ENCODE measurements at regions of chr19 and their contacts with region 1.

Region 1: DNA sequence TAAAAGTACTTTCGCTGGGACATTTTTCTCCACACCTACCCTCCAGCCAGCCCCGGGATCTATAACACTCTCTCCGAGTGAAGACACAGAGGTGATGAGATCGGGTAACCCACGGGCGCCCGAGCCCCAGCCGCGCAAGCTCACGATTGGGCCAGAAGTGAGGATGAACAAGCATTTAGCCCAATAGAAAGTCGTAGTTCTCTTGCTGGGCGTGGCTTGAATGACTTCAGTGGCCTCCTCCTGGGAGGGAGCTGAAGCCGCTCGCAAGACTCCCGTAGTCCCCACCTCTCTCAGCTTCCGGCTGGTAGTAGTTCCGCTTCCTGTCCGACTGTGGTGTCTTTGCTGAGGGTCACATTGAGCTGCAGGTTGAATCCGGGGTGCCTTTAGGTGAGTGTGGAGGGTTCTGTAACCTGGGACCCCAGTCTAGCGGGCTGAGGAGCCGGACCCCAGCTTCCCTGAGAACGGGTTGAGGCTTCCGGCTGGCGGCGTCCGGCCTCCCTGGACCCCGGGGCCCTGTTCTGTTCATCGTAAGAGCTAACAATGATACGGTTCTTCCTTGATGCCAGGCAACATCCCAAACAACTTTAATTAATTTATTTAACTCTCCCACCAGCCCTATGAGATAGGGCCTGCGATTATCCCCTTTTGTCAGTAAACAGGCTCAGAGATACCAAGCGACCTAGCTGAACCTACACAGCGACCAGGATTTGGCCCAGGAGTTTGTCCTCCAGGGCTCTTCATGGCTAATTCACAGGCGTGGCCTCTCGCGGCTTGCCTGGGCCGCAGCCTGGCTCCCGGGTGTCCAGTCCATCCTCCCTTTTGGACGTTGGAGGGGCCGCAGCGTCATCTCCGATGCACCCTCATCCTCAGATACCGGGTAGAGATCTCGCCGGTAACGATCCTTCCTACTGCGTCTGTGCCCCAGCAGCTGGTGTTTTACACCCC is at the start of gene COX6B1:
- DNase-seq: peak; percentile 95
- ATAC-seq: peak; percentile 76
- H3K4me3 Mint-ChIP-seq: peak within 1 kb of the TSS; percentile 92
- H3K27ac Mint-ChIP-seq: peak within 1 kb of the TSS; percentile 84
- H3K4me1 Mint-ChIP-seq: peaks cover 39% of the 10 kb centered on the region
- H3K27me3 Mint-ChIP-seq: no peaks in the 10 kb centered on the region
- total RNA-seq, gene COX6B1: 385 to 437 TPM

Region 2: DNA sequence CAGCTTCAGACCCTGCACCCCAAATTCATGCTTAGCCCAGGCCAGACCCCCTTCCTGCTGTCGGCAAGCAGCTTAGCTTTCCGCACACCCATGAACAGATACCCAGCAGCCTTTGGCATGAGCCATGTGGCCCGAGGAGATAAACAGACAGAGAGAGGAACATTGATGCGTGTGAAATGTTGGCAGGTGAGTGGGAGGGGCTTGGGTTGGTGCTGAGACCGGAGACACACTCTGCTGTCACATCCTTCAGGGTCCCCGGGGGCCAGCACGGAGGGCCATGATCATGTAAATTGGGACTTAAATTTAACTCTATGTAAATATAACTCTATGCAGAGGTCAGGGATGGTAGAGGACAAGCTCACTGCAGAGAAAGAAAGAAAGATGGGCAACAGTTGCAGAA is 317.8 kb before region 1 on chr19:
- CTCF ChIA-PET with region 1: no interaction called
- POLR2A ChIA-PET with region 1: no interaction called
- intact Hi-C with region 1: no loop called
- DNase-seq: no peak
- ATAC-seq: no peak
- H3K4me3 Mint-ChIP-seq: no peak overlapping the region
- H3K27ac Mint-ChIP-seq: no peak overlapping the region
- H3K4me1 Mint-ChIP-seq: peaks cover 26% of the 10 kb centered on the region
- H3K27me3 Mint-ChIP-seq: peaks cover 3% of the 10 kb centered on the region

Region 3: DNA sequence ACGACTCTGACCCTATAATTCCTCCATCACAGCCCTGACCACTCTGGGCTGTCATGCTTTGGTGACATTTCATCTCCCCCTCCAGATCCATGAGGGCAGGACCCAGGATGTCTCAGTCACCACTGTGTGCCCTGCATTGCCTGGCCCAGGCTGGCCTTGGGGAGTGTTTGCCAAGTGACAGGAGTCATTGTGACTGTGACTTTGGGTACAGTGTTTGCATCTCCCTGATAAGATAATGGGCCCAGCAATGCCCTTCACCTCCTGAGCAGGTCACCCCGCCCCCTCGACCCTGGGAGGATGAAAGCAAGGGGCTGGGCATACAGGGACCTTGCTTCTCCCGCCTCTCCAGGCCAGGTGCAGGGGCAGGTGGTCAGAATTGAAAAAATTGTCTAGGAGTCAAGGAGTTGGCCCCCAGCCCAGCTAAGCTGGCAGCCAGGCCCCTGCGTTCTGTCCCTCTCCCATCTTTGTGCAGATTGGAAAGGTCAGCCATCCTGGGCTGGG is 79.0 kb before region 1 on chr19:
- CTCF ChIA-PET with region 1: no interaction called
- POLR2A ChIA-PET with region 1: no interaction called
- intact Hi-C with region 1: no loop called
- DNase-seq: no peak
- ATAC-seq: no peak
- H3K4me3 Mint-ChIP-seq: no peak overlapping the region
- H3K27ac Mint-ChIP-seq: no peak overlapping the region
- H3K4me1 Mint-ChIP-seq: no peaks in the 10 kb centered on the region
- H3K27me3 Mint-ChIP-seq: peaks cover 25% of the 10 kb centered on the region

Region 4: DNA sequence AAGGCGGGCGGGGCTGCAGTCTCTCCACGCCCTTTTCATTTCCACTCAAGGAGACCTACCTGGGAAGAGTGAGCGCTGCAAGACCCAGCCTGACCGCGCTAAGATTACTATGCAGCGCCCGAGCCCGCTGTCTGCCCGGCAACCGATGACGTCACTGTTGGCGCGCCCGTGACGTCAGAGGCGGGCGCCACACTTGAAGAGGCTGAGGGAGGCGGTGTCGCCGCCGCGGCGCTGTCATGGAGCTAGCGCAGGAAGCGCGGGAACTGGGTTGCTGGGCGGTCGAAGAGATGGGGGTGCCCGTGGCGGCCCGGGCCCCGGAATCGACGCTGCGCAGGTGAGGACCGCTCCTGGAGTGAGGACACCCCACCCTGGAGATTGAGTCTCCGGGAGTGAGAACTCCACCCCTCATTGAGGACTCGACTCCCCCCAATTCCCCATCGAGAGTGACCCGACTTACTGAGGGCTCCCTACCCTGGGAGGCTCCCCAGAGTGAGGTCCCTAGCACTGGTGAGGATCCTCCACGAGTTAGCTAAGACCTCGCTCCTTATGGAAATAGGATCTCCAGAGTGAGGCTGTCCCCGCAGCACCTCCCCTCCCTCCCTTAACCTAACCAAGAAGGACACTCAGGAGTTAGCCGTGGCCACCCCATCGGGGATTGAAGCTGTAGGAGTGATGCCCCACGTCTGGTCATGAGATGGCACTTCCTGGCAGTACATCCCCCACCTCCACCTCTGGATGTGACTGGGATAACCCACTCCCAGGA is 35.5 kb before region 1 on chr19 and contains the start of gene HAUS5:
- CTCF ChIA-PET with region 1: interaction called, 3 read pairs
- POLR2A ChIA-PET with region 1: interaction called, 8 read pairs
- intact Hi-C with region 1: loop called in 1 of 2 experiments (anchors 1 kb)
- DNase-seq: peak; percentile 98
- ATAC-seq: peak; percentile 96
- H3K4me3 Mint-ChIP-seq: peak within 1 kb of the TSS; percentile 81
- H3K27ac Mint-ChIP-seq: peak within 1 kb of the TSS; percentile 90
- H3K4me1 Mint-ChIP-seq: peaks cover 23% of the 10 kb centered on the region
- H3K27me3 Mint-ChIP-seq: no peaks in the 10 kb centered on the region
- total RNA-seq, gene HAUS5: 39.7 to 41.0 TPM

Region 5: GRCh38 chr19:35716801-35717666 is 68.7 kb after region 1 on chr19:
- CTCF ChIA-PET with region 1: interaction called, 4 read pairs
- POLR2A ChIA-PET with region 1: interaction called, 7 read pairs
- intact Hi-C with region 1: loop called in 1 of 2 experiments (anchors 1 kb)
- DNase-seq: peak; percentile 98
- ATAC-seq: peak; percentile 61
- H3K4me3 Mint-ChIP-seq: peak overlapping the region; percentile 97
- H3K27ac Mint-ChIP-seq: peak overlapping the region; percentile 90
- H3K4me1 Mint-ChIP-seq: peaks cover 41% of the 10 kb centered on the region
- H3K27me3 Mint-ChIP-seq: no peaks in the 10 kb centered on the region

Region 6: DNA sequence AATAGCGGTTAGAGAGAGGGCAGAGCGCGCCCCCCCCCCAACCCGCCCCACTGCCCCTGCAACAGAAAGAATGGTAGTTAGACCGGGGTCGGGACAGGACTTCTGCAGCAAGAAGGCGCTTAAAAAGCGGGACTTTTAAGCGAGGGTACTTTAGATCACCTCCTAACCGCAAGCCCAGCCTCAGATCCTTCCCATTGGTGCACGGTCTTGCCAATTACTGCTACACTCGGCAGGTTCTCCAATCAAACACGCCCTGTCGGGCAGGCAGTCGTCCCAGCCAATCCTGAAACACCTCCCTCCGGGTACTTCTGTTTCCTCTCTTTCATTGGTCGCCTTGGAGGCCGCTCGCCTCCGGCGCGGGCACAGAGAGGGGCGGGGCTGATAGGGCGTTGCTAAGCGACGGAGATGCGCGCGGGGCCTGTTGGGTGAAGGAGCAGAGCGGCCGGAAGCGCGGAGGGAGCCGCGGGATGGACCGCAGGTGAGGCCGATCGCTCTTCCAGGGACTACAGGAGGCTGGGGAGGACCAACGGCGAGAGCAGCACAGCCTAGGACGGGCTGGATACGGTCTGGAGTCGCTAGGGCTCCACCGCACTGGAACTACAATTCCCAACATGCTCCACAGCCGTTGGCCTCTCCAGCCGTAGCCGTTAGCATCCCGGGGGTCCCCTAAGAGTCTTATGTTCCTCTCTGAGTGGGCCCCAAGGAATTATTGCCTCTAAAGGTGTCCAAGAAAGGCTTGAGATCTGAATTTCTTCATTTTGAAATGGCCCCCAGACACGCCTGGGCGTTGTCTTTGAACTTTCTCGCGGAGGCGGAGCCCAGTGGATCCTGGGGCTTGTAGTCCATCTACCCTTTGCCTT is 109.7 kb after region 1 on chr19 and contains the start of gene PROSER3:
- CTCF ChIA-PET with region 1: no interaction called
- POLR2A ChIA-PET with region 1: no interaction called
- intact Hi-C with region 1: loop called in 1 of 2 experiments (anchors 1 kb)
- DNase-seq: peak; percentile 99
- ATAC-seq: peak; percentile 98
- H3K4me3 Mint-ChIP-seq: peak within 1 kb of the TSS; percentile 85
- H3K27ac Mint-ChIP-seq: peak within 1 kb of the TSS; percentile 91
- H3K4me1 Mint-ChIP-seq: peaks cover 29% of the 10 kb centered on the region
- H3K27me3 Mint-ChIP-seq: peaks cover 4% of the 10 kb centered on the region
- total RNA-seq, gene PROSER3: 39.8 to 62.8 TPM

Region 7: DNA sequence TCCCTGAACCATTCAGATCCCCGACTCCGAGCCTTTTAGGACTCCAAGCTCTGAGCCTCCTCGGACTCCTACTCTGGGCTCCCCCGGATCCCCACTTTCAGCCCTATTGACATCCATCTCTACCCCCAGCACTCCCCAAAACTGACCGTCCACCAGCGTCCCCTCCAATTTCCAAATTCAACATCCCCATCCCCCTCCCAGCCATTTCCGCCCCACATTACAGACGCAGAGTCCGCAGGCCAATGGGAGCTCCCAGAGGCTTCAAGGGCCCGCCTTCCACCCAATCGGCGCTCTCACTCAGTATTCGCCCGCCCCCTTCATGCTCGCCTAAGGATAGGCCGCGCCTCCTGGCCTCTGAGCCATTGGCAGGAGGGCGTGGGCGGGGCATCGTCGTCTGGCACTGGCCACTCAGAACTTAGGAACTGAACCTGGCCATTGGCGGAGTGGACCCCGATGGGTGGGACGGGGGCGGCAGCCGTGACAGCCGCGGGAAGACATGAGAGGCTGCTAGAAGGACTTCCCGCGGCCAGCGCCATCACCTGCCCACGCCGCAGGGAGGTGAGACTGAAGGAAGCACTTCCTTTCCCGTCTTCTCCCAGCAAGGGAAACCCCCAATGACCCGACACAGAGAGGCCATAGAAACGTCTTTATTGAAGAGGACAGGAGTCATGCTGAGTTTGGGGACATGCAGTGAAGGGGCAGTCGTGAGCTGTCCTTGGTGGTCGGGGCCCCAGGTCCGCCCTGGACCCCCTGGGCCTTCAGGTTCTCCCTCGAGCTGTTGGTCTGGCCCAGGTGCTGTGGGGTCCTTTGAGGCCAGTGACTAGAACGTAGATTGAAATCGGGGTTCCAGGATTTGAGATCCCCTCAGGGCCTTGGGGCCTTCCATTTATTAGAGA is 366.0 kb after region 1 on chr19 and contains the start of gene ALKBH6:
- CTCF ChIA-PET with region 1: no interaction called
- POLR2A ChIA-PET with region 1: no interaction called
- intact Hi-C with region 1: loop called in 1 of 2 experiments (anchors 1 kb)
- DNase-seq: peak; percentile 100
- ATAC-seq: peak; percentile 98
- H3K4me3 Mint-ChIP-seq: peak within 1 kb of the TSS; percentile 96
- H3K27ac Mint-ChIP-seq: peak within 1 kb of the TSS; percentile 94
- H3K4me1 Mint-ChIP-seq: peaks cover 32% of the 10 kb centered on the region
- H3K27me3 Mint-ChIP-seq: no peaks in the 10 kb centered on the region
- total RNA-seq, gene ALKBH6: 40.6 to 42.2 TPM